ENCODE measurements at regions of chr14 and their contacts with region 1.

Region 1: GRCh38 chr14:60266021-60266937 is 17.3 kb downstream of the PPM1A start:
- DNase-seq: no peak
- ATAC-seq: peak; percentile 54
- H3K4me3 Mint-ChIP-seq: no peak overlapping the region
- H3K27ac Mint-ChIP-seq: no peak overlapping the region
- H3K4me1 Mint-ChIP-seq: peaks cover 22% of the 10 kb centered on the region
- H3K27me3 Mint-ChIP-seq: no peaks in the 10 kb centered on the region
- CTCF ChIP-seq: no peak

Region 2: GRCh38 chr14:60254176-60254575 is 12.1 kb before region 1 on chr14:
- CTCF ChIA-PET with region 1: interaction called, 22 read pairs
- POLR2A ChIA-PET with region 1: interaction called, 4 read pairs
- intact Hi-C with region 1: loop called (anchors 1 kb)
- DNase-seq: no peak
- ATAC-seq: no peak
- H3K4me3 Mint-ChIP-seq: no peak overlapping the region
- H3K27ac Mint-ChIP-seq: no peak overlapping the region
- H3K4me1 Mint-ChIP-seq: peaks cover 50% of the 10 kb centered on the region
- H3K27me3 Mint-ChIP-seq: no peaks in the 10 kb centered on the region
- CTCF ChIP-seq: no peak

Region 3: DNA sequence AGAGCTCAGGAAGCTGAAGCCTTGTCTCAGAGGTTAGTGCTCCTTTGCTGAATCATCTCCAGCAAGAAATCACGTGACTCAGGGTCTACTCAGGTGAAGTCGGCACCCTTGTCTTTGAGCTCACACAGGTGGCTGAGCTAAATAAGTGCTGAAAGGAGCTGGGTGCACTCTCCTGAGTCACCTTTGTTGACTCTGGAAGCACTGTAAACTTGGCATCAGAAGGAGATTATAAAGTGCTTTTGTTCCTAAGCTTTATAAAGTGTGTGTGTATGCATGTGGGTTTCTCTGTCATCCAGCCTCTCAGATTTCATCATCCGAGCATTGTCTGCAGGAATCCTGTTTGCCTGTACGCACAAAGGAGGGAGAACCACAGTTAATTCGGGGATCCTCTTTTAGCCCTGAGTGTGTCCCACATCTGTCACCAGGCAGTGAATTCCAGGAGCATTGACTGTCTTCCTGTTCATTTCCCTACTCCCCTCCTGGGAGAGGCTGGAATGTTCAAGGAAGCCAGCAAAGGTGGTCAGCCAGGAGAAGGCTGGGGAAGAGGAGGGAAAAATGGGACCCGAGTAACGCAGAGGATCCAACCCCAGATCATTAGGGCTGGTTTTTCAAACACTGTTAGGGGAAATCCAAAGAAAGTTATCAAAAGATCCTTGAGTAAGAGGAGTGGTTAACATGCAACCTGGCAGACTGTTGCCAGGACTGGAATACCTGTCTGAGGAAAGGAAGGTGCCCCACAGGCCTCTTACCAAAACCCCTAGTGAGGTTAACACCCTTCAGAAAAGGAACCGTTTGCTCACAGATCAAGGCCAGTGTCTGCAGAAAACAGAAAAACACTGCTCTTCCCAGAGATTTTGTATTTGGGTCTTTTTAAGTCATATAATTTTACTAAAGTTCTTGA is 1271.5 kb after region 1 on chr14:
- CTCF ChIA-PET with region 1: no interaction called
- POLR2A ChIA-PET with region 1: no interaction called
- intact Hi-C with region 1: no loop called
- DNase-seq: no peak
- ATAC-seq: no peak
- H3K4me3 Mint-ChIP-seq: no peak overlapping the region
- H3K27ac Mint-ChIP-seq: no peak overlapping the region
- H3K4me1 Mint-ChIP-seq: peaks cover 14% of the 10 kb centered on the region
- H3K27me3 Mint-ChIP-seq: no peaks in the 10 kb centered on the region
- CTCF ChIP-seq: no peak